OCI-LY7 (cell line): ENCODE measurements at regions of chr12 and their contacts with region 1.

Region 1: DNA sequence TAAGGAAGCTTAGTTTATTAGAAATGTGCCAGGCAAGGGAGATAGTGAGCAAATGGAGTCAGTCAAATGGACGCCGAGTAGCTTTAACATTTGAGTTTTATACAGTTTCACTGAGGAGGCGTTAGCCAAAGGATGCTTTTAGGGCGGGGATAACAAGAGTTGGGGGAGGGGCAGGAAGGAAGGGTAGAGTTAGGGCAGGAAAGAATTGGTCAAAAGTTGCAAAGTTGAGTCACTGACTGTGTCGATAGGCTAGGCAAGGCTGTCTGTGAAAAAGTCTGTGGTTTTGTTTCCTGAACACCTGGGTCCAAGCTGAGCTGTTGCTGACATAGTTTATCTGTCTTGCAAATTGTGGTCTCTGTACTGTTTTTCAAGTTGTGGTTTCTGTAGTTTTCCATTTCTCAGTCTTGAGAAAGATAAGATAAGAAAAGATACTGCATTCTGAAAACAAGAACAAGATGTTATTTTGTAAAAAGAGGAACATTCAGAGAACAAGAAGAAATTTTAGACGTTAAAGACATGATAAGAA is 62.6 kb upstream of the RESF1 start:
- DNase-seq: peak; percentile 100
- H3K4me3 ChIP-seq: peak overlapping the region; percentile 54
- H3K27ac ChIP-seq: peak overlapping the region; percentile 96
- H3K4me1 ChIP-seq: peaks cover 37% of the 10 kb centered on the region
- CTCF ChIP-seq: no peak

Region 2: DNA sequence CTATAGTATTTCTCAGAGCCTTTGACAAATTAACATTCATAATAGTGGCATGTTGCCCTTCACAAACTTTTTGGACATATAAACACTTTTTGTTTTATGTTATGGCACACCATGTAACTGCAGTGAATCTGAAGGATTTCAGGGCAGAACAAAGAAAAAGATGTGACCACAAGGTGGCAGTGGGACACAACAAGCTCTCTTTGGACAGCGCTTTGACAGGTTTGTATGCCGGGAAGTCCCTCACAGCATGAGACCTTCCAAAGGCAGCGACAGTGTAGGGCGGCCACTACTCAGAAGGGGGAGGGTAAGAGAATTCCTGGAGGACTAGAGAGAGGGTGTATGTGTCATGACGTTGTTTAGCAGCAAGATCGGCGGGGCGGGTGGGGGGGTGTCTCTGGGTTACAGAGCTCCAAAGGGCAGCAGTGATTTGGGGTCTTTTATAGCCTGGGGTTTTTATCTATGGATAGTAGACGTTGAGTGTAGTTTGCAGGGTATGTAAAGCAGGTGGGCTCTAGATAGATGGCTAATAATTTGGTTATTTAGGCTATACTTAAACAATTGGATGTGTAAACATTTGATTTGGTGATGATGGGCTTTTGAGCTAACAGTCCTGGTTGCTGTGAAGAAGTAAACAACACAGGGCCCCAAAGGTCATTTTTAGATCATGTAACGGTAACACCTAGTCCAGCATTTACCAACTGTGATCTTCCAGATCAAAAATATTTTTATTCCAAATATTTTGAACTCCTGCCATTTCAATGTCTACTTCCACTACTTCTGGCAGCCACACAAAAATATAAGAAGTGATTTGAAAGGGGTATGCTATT is 214.2 kb before region 1 on chr12:
- CTCF ChIA-PET with region 1: no interaction called
- POLR2A ChIA-PET with region 1: no interaction called
- intact Hi-C with region 1: loop called (anchors 2 kb)
- DNase-seq: peak; percentile 95
- H3K4me3 ChIP-seq: no peak overlapping the region
- H3K27ac ChIP-seq: peak overlapping the region; percentile 56
- H3K4me1 ChIP-seq: peaks cover 34% of the 10 kb centered on the region
- CTCF ChIP-seq: peak; percentile 92

Region 3: DNA sequence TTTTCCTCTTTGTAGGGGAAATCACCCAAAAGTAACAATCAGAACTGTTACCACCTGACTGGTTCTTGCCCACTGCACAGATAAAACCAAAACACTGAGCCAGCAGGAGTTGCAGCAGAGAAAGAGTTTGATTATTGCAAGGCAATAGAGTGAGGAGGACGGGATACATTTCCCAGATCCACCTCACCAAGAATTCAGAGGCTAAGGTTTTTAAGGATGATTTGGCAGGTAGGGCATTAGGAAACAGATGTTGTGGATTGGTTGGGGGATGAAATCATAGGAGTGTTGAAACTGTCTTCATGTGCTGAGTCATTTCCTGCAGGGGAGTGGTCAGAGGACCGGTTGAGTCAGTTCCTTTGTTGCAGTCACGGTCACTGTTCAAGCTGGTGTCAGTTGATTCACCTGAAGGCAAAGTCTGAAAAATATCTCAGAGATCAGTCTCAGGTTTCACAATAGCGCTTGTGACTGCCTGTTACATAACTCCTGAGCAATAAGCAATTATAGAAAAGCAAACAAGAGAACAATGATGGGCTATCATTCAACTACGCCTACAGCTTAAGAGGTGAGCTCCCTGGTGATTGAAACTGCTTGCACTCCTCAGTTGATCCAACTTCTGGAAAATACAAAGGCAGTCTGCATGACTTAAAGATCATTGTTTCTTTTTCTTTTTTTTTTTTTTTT is 147.4 kb before region 1 on chr12:
- CTCF ChIA-PET with region 1: no interaction called
- POLR2A ChIA-PET with region 1: interaction called, 4 read pairs
- intact Hi-C with region 1: loop called (anchors 5 kb)
- DNase-seq: peak; percentile 79
- H3K4me3 ChIP-seq: peak overlapping the region; percentile 2
- H3K27ac ChIP-seq: peak overlapping the region; percentile 74
- H3K4me1 ChIP-seq: peaks cover 83% of the 10 kb centered on the region
- CTCF ChIP-seq: no peak

Region 4: GRCh38 chr12:31876568-31877424 is 19.8 kb before region 1 on chr12:
- CTCF ChIA-PET with region 1: no interaction called
- POLR2A ChIA-PET with region 1: interaction called, 12 read pairs
- intact Hi-C with region 1: no loop called
- DNase-seq: peak; percentile 59
- H3K4me3 ChIP-seq: no peak overlapping the region
- H3K27ac ChIP-seq: peak overlapping the region; percentile 54
- H3K4me1 ChIP-seq: peaks cover 45% of the 10 kb centered on the region
- CTCF ChIP-seq: no peak

Region 5: GRCh38 chr12:31951008-31951407 is 54.4 kb after region 1 on chr12:
- CTCF ChIA-PET with region 1: no interaction called
- POLR2A ChIA-PET with region 1: interaction called, 5 read pairs
- intact Hi-C with region 1: loop called (anchors 2 kb)
- DNase-seq: peak; percentile 39
- H3K4me3 ChIP-seq: no peak overlapping the region
- H3K27ac ChIP-seq: peak overlapping the region; percentile 71
- H3K4me1 ChIP-seq: peaks cover 35% of the 10 kb centered on the region
- CTCF ChIP-seq: no peak

Region 6: DNA sequence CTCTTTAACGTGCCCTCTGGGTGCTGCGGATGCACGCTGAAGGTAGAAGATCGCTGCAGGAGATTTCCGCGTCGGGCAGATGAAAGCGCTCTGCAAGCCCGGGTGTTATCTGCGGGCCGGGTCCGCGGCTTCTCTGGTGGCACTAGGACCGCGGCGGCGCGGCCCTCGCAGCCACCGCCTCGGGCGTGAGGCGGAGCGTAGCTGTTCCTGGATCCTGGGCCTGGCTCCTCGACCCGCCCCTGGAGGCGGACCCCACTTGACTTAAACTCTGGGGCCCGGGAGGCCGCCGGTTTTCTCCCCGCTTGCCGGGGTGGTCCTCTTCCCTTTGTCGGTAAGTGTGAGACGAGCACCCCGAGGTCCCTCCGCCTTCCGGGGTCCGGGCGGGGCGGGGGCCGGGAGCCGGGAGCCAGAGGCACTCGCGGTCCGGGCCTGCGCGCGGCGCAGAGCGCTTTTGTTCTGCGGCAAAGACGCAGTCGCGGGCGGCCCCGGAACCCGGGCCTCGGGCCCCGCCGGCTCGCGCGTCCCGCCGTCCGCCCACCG is 62.7 kb after region 1 on chr12 and contains the start of gene RESF1:
- CTCF ChIA-PET with region 1: no interaction called
- POLR2A ChIA-PET with region 1: interaction called, 3 read pairs
- intact Hi-C with region 1: loop called (anchors 1 kb)
- DNase-seq: peak; percentile 97
- H3K4me3 ChIP-seq: peak within 1 kb of the TSS; percentile 78
- H3K27ac ChIP-seq: peak within 1 kb of the TSS; percentile 87
- H3K4me1 ChIP-seq: peaks cover 28% of the 10 kb centered on the region
- CTCF ChIP-seq: no peak
- total RNA-seq, gene RESF1: 53.3 and 70.4 TPM in 2 replicates